ENCODE measurements at regions of chr6 and their contacts with region 1.

Region 1: GRCh38 chr6:155223646-155224451 is 40.0 kb upstream of the CLDN20 start:
- DNase-seq: peak; percentile 90
- H3K4me3 ChIP-seq: no peak overlapping the region
- H3K27ac ChIP-seq: peak overlapping the region; percentile 74
- H3K4me1 ChIP-seq: peaks cover 15% of the 10 kb centered on the region
- H3K27me3 ChIP-seq: no peaks in the 10 kb centered on the region
- CTCF ChIP-seq: no peak
- POLR2A ChIP-seq: no peak

Region 2: GRCh38 chr6:155013457-155013876 is 210.4 kb before region 1 on chr6:
- CTCF ChIA-PET with region 1: no interaction called
- POLR2A ChIA-PET with region 1: no interaction called
- dilution Hi-C with region 1: no loop called
- intact Hi-C with region 1: no loop called
- DNase-seq: peak; percentile 89
- H3K4me3 ChIP-seq: peak overlapping the region in 2 of 3 experiments; percentile 39 to 65
- H3K27ac ChIP-seq: peak overlapping the region; percentile 41
- H3K4me1 ChIP-seq: peaks cover 25% of the 10 kb centered on the region
- H3K27me3 ChIP-seq: no peaks in the 10 kb centered on the region
- CTCF ChIP-seq: no peak
- POLR2A ChIP-seq: no peak

Region 3: GRCh38 chr6:155201461-155202226 is 22.2 kb before region 1 on chr6:
- CTCF ChIA-PET with region 1: interaction called, 3 read pairs
- POLR2A ChIA-PET with region 1: no interaction called
- dilution Hi-C with region 1: no loop called
- intact Hi-C with region 1: loop called (anchors 1 kb)
- DNase-seq: peak; percentile 96
- H3K4me3 ChIP-seq: no peak overlapping the region
- H3K27ac ChIP-seq: peak overlapping the region; percentile 96
- H3K4me1 ChIP-seq: peaks cover 24% of the 10 kb centered on the region
- H3K27me3 ChIP-seq: no peaks in the 10 kb centered on the region
- CTCF ChIP-seq: no peak
- POLR2A ChIP-seq: no peak

Region 4: DNA sequence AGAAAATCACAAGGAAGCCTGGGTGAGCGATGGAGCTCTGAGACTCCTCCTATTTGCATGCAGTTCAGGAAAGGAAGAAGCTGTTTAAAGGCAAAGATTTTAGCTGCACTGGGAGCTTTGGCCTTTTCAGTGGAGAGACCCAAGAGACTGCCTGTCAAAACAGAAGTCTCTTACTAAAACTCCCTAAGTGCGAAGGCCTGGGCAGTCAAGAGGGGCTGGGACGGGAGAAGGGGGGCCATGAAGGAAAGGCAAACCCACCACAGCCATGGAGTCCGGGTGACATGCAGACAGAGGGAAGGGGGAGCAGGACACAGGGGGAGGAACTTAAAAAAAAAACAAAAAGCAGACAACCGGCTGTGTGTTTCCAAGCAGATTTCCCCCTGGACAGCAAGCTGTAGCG is 769.4 kb after region 1 on chr6:
- CTCF ChIA-PET with region 1: no interaction called
- POLR2A ChIA-PET with region 1: no interaction called
- dilution Hi-C with region 1: no loop called
- intact Hi-C with region 1: no loop called
- DNase-seq: no peak
- H3K4me3 ChIP-seq: no peak overlapping the region
- H3K27ac ChIP-seq: no peak overlapping the region
- H3K4me1 ChIP-seq: no peaks in the 10 kb centered on the region
- H3K27me3 ChIP-seq: no peaks in the 10 kb centered on the region
- CTCF ChIP-seq: no peak
- POLR2A ChIP-seq: no peak